CD4-positive, alpha-beta memory T cell (primary cell): ENCODE measurements at regions of chr11 and their contacts with region 1.

Region 1: DNA sequence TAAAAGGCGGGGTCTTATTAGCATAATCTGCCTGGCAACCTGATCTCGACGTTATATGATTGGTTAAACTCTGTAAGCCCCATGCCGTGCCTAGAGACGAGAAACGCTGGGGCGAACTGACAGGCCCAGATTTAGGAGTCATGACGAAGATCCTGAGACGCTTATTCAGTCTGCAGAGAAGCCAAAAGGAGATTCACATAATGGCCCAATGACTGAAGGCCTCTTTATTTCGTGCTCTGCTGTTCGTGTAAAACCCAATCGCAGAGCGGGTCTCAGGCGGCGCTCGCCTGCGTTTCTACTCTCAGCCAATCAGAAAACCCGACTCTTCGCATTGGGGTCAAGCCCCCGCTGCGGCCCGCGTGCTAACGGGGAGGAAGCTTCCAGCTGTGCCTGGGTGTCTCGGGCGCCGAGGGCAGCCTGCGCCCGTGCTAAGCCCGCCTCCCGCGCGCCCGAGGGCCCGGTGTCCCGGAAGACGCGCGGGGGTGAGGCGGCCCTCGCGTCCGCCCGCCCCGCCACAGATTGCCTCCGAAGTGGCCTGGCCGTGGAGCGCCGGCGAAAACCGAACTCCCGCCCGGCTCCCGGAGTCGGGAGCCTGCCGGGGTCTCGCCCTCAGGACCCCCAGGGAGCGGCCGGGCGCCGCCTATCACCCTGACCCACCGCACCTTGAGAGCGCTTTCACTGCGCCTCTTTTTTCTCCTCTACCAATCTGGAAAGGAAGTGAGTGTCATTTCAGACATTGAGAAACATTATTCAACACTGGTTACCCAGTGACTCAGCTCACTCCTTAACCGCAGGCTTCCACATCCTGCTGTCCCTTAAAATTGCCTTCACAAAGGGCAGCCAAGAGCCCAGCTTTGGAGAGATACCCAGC is 446 bp upstream of the PRDM10 start:
- DNase-seq: peak; percentile 95 to 96 (median 96)
- H3K4me3 ChIP-seq: peak overlapping the region; percentile 80 to 91
- H3K4me3 Mint-ChIP-seq: peak overlapping the region; percentile 99 to 100 (median 100)
- H3K27ac ChIP-seq: peak overlapping the region; percentile 96
- H3K27ac Mint-ChIP-seq: peak overlapping the region; percentile 98 to 100 (median 100)
- H3K4me1 ChIP-seq: peaks cover 35% of the 10 kb centered on the region
- H3K4me1 Mint-ChIP-seq: peaks cover 20 to 51% (median 35%) of the 10 kb centered on the region in 4 donors
- H3K27me3 ChIP-seq: no peaks in the 10 kb centered on the region
- H3K27me3 Mint-ChIP-seq: no peaks in the 10 kb centered on the region

Region 2: GRCh38 chr11:129815596-129816461 is 187.3 kb before region 1 on chr11 and contains the start of gene TMEM45B:
- CTCF ChIA-PET with region 1: no interaction called
- POLR2A ChIA-PET with region 1: interaction called, 7 read pairs
- intact Hi-C with region 1: loop called (anchors 10 kb)
- DNase-seq: peak; percentile 34 to 50 (median 43)
- H3K4me3 ChIP-seq: peak within 1 kb of the TSS in 1 of 2 donors; percentile 33
- H3K4me3 Mint-ChIP-seq: peak within 1 kb of the TSS; percentile 86 to 93 (median 90)
- H3K27ac ChIP-seq: no peak within 1 kb of the TSS
- H3K27ac Mint-ChIP-seq: peak within 1 kb of the TSS; percentile 84 to 97 (median 94)
- H3K4me1 ChIP-seq: peaks cover 30% of the 10 kb centered on the region
- H3K4me1 Mint-ChIP-seq: peaks cover 34 to 71% (median 58%) of the 10 kb centered on the region in 4 donors
- H3K27me3 ChIP-seq: no peaks in the 10 kb centered on the region
- H3K27me3 Mint-ChIP-seq: peaks cover 0 to 14% of the 10 kb centered on the region in 2 donors
- total RNA-seq, gene TMEM45B: 30.8 to 34.4 TPM

Region 3: DNA sequence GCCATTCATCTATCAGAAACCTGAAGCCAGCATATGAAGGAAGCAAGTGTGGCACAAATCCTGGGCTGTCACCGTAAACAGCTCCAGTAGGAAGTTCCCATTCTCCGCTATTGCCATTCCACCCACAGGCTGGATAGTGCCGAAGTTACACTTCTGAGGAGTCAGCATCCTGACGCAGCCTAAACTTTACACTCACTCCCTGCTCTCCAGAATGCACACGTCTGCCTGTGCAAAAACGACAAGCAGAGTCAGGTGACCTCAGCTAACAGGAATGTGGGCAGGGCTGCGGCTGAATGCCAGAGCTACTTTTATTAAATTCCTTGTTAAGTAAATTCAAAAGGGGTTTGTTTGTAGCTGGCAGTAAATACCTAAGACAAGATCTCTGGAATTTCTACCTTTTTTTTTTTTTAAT is 141.4 kb before region 1 on chr11:
- CTCF ChIA-PET with region 1: no interaction called
- POLR2A ChIA-PET with region 1: interaction called, 17 read pairs
- intact Hi-C with region 1: no loop called
- DNase-seq: no peak
- H3K4me3 ChIP-seq: no peak overlapping the region
- H3K4me3 Mint-ChIP-seq: peak overlapping the region in 4 of 8 donors; percentile 16 to 72 (median 32)
- H3K27ac ChIP-seq: no peak overlapping the region
- H3K27ac Mint-ChIP-seq: peak overlapping the region; percentile 83 to 96 (median 93)
- H3K4me1 ChIP-seq: peaks cover 59% of the 10 kb centered on the region
- H3K4me1 Mint-ChIP-seq: peaks cover 28 to 55% (median 43%) of the 10 kb centered on the region in 4 donors
- H3K27me3 ChIP-seq: no peaks in the 10 kb centered on the region
- H3K27me3 Mint-ChIP-seq: no peaks in the 10 kb centered on the region

Region 4: GRCh38 chr11:129922674-129923073 is 80.4 kb before region 1 on chr11:
- CTCF ChIA-PET with region 1: interaction called, 3 read pairs
- POLR2A ChIA-PET with region 1: no interaction called
- intact Hi-C with region 1: loop called (anchors 2 kb)
- DNase-seq: no peak
- H3K4me3 ChIP-seq: no peak overlapping the region
- H3K4me3 Mint-ChIP-seq: no peak overlapping the region
- H3K27ac ChIP-seq: no peak overlapping the region
- H3K27ac Mint-ChIP-seq: peak overlapping the region in 2 of 7 donors; percentile 1 to 2
- H3K4me1 ChIP-seq: peaks cover 10% of the 10 kb centered on the region
- H3K4me1 Mint-ChIP-seq: peaks cover 3 to 5% (median 4%) of the 10 kb centered on the region in 4 donors
- H3K27me3 ChIP-seq: no peaks in the 10 kb centered on the region
- H3K27me3 Mint-ChIP-seq: no peaks in the 10 kb centered on the region

Region 5: DNA sequence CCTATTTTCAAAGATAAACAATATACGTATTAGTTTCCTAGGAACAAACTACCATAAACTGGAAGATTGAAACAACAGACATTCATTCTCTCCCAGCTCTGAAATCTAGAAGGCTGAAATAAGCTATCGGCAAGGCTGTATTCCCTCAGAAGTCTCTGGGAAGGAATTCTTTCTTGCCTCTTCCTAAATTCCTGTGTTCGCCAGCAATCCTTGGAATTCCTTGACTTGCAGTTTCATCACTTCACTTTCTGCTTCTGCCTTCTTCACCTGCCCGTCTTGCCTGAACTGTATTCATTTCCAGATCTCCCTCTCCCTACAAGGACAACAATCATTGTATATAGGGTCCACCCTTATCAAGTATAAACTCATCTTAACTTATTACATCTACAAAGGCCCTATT is 17.2 kb after region 1 on chr11:
- CTCF ChIA-PET with region 1: interaction called, 5 read pairs
- POLR2A ChIA-PET with region 1: interaction called, 20 read pairs
- intact Hi-C with region 1: no loop called
- DNase-seq: no peak
- H3K4me3 ChIP-seq: no peak overlapping the region
- H3K4me3 Mint-ChIP-seq: no peak overlapping the region
- H3K27ac ChIP-seq: no peak overlapping the region
- H3K27ac Mint-ChIP-seq: no peak overlapping the region
- H3K4me1 ChIP-seq: no peaks in the 10 kb centered on the region
- H3K4me1 Mint-ChIP-seq: peaks cover 0 to 1% (median 0%) of the 10 kb centered on the region in 4 donors
- H3K27me3 ChIP-seq: no peaks in the 10 kb centered on the region
- H3K27me3 Mint-ChIP-seq: peaks cover 0 to 4% of the 10 kb centered on the region in 2 donors

Region 6: DNA sequence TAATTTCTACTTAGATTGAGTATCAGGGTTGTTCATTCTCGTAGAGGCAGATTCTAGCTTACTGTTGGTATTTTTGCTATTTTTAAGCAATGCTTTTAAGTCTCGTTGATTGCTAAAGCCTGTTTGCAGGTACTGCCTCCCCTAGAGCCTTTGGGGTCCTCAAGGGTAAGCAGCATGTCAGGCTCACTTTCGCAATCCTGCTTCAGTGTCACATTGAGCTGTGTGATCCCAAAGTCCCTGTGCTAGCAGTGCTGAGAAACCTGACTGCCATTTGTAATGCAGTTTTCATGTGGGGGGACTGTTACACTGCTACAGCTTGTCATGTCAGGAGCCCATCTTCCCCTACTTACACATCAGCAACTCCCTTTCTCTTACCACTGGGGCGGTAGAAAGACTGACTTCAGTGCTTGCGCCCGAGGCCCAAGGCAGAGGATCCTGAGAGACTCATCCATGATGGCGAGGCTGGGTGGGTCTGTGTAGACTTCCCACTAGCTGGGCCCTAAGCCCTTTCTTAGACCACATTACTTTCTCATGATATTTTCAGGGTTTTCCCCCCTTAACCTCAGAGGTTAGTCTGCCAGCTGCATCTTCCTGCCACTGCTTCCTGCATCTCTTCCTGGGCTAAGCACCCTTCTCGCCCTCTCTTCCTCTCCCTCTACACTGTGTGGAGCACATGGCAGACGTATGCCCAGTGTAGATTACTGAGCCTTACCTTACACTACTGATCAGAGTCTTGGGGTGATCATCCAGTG is 115.7 kb after region 1 on chr11:
- CTCF ChIA-PET with region 1: no interaction called
- POLR2A ChIA-PET with region 1: interaction called, 11 read pairs
- intact Hi-C with region 1: no loop called
- DNase-seq: peak; percentile 21 to 52 (median 35)
- H3K4me3 ChIP-seq: no peak overlapping the region
- H3K4me3 Mint-ChIP-seq: peak overlapping the region in 7 of 8 donors; percentile 1 to 66 (median 44)
- H3K27ac ChIP-seq: no peak overlapping the region
- H3K27ac Mint-ChIP-seq: peak overlapping the region in 1 of 7 donors; percentile 15
- H3K4me1 ChIP-seq: peaks cover 40% of the 10 kb centered on the region
- H3K4me1 Mint-ChIP-seq: peaks cover 31 to 45% (median 39%) of the 10 kb centered on the region in 4 donors
- H3K27me3 ChIP-seq: no peaks in the 10 kb centered on the region
- H3K27me3 Mint-ChIP-seq: no peaks in the 10 kb centered on the region

Region 7: GRCh38 chr11:130916238-130916855 is 913.3 kb after region 1 on chr11 and contains the start of gene SNX19:
- CTCF ChIA-PET with region 1: no interaction called
- POLR2A ChIA-PET with region 1: interaction called, 13 read pairs
- intact Hi-C with region 1: loop called (anchors 2 kb)
- DNase-seq: peak; percentile 88 to 91 (median 90)
- H3K4me3 ChIP-seq: peak within 1 kb of the TSS; percentile 66 to 74
- H3K4me3 Mint-ChIP-seq: peak within 1 kb of the TSS; percentile 88 to 92 (median 90)
- H3K27ac ChIP-seq: peak within 1 kb of the TSS; percentile 95
- H3K27ac Mint-ChIP-seq: peak within 1 kb of the TSS; percentile 92 to 95 (median 93)
- H3K4me1 ChIP-seq: peaks cover 41% of the 10 kb centered on the region
- H3K4me1 Mint-ChIP-seq: peaks cover 18 to 57% (median 33%) of the 10 kb centered on the region in 4 donors
- H3K27me3 ChIP-seq: no peaks in the 10 kb centered on the region
- H3K27me3 Mint-ChIP-seq: peaks cover 5% of the 10 kb centered on the region in 2 donors
- total RNA-seq, gene SNX19: 84.1 to 94.2 TPM